ENCODE measurements at regions of chr20 and their contacts with region 1.

Region 1: GRCh38 chr20:20593447-20594170 is 118.8 kb downstream of the RALGAPA2 start:
- DNase-seq: peak; percentile 46 to 64 (median 64)
- H3K4me3 ChIP-seq: no peak overlapping the region
- H3K27ac ChIP-seq: no peak overlapping the region
- H3K4me1 ChIP-seq: no peaks in the 10 kb centered on the region
- H3K27me3 ChIP-seq: no peaks in the 10 kb centered on the region

Region 2: GRCh38 chr20:20083807-20084206 is 509.8 kb before region 1 on chr20:
- CTCF ChIA-PET with region 1: interaction called, 26 read pairs
- POLR2A ChIA-PET with region 1: no interaction called
- DNase-seq: peak; percentile 29 to 69 (median 68)
- H3K4me3 ChIP-seq: peak overlapping the region in 1 of 7 experiments; percentile 57
- H3K27ac ChIP-seq: no peak overlapping the region
- H3K4me1 ChIP-seq: peaks cover 0 to 4% (median 0%) of the 10 kb centered on the region in 4 experiments
- H3K27me3 ChIP-seq: peaks cover 0 to 3% (median 0%) of the 10 kb centered on the region in 5 experiments

Region 3: DNA sequence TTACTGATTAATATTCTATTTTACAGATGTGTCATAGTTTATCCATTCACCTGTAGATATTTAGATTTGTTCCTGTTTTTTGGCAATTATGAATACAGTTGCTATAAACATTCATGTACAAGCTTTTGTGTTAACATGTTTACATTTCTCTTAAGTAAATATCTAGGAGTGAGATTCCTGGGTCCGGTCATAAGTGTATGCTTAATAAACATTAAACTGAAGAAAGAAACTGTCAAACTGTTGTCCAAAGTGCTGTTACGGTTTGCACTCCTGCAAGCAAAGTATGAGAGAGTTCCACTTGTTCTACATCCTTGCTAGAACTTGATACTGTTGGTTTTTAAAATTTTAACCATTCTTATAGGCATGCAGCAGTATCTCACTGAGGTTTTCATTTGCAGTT is 19.8 kb before region 1 on chr20:
- CTCF ChIA-PET with region 1: interaction called, 11 read pairs
- POLR2A ChIA-PET with region 1: no interaction called
- DNase-seq: no peak
- H3K4me3 ChIP-seq: no peak overlapping the region
- H3K27ac ChIP-seq: no peak overlapping the region
- H3K4me1 ChIP-seq: peaks cover 0 to 5% (median 3%) of the 10 kb centered on the region in 4 experiments
- H3K27me3 ChIP-seq: no peaks in the 10 kb centered on the region

Region 4: DNA sequence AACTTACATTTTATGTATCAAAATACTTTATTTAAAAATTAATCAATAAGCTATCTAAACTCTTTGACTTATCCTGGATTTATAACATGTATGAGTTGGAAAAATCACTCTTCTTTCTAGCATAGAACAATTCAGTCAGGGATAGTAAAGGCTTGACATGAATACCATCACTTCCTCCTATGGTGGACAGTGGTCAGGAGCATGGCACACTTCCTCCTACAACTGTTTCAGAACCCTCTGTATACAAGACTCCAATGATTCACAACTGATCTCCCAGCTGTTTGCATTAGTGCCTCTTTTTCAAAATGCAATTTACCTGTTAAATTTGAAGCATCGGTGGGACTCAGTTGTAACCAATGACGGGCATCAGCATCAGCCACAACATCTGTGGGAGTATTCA is 10.9 kb before region 1 on chr20:
- CTCF ChIA-PET with region 1: interaction called, 16 read pairs
- POLR2A ChIA-PET with region 1: no interaction called
- DNase-seq: no peak
- H3K4me3 ChIP-seq: no peak overlapping the region
- H3K27ac ChIP-seq: no peak overlapping the region
- H3K4me1 ChIP-seq: peaks cover 6 to 22% (median 13%) of the 10 kb centered on the region in 4 experiments
- H3K27me3 ChIP-seq: no peaks in the 10 kb centered on the region

Measured in common myeloid progenitor, CD34-positive (primary cell).